ENCODE measurements at regions of chr6 and their contacts with region 1.

Region 1: DNA sequence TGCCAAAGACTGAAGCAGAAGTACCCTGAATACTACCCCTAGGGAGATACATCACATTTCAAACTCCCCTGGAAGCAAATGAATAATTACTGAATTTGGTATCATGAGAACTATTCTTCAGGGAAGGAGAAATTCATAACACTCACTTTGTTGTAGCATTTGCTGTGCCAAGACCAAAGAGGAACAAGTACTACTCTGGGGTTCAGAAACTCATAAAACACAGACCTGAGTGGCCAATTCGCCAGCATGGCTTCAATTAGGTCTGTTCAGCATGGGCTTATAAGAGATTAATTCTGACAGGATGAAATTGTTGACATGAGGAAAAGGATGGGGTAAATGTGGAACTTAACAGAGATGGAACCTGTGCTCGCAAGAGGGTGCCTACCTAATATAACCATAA is 6.5 kb downstream of the ELOVL5 start:
- DNase-seq: no peak
- ATAC-seq: peak; percentile 29
- H3K4me3 ChIP-seq: peak overlapping the region in 2 of 5 experiments; percentile 3 to 33
- H3K4me3 Mint-ChIP-seq: peak overlapping the region; percentile 77
- H3K27ac ChIP-seq: peak overlapping the region in 1 of 2 donors; percentile 76
- H3K27ac Mint-ChIP-seq: peak overlapping the region; percentile 89
- H3K4me1 ChIP-seq: peaks cover 88 to 91% of the 10 kb centered on the region in 2 donors
- H3K4me1 Mint-ChIP-seq: peaks cover 94% of the 10 kb centered on the region
- H3K27me3 ChIP-seq: no peaks in the 10 kb centered on the region
- H3K27me3 Mint-ChIP-seq: no peaks in the 10 kb centered on the region
- CTCF ChIP-seq: no peak

Region 2: DNA sequence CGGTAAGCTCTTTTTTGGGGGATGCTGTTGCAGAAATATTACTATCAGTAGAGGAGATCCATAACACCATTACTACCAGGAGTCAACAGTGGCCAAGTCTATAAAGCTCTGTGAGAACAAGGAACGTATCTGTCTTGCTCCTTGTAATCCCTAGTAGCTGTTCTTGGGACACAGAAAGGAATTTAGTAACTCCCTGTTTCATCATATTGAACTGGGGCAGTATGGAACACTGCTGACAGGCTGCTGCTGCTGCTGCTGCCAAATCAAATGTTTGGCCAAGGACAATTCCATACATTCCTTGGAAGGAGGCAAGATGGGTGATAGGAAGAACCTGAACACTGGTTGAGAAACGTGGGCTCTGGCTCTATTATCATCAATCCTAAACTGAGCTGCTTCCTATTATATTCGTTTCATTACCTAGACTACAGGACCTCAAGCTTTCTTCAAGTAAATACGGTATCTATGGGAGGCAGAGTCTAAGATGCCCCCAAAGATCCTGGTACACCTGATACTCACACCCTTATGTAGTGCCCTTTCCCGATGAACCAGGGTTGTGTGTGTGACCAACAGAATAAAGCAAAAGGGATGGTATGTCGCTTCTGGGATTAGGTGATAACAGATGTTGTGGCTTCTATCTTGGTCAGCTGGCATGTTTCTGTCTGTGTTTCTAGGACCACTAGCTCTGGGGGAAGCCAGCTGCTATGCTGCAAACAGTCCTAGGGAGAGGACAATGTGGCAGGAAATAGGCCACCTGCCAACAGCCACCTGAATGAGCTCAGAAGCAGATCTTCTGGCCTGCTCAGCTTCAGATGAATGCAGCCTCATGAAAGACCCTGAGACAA is 32.9 kb before region 1 on chr6:
- CTCF ChIA-PET with region 1: interaction called, 3 read pairs
- POLR2A ChIA-PET with region 1: no interaction called
- intact Hi-C with region 1: loop called (anchors 2 kb)
- DNase-seq: peak; percentile 39
- ATAC-seq: peak; percentile 60
- H3K4me3 ChIP-seq: peak overlapping the region in 1 of 5 experiments; percentile 2
- H3K4me3 Mint-ChIP-seq: peak overlapping the region; percentile 70
- H3K27ac ChIP-seq: peak overlapping the region; percentile 57 to 86
- H3K27ac Mint-ChIP-seq: peak overlapping the region; percentile 85
- H3K4me1 ChIP-seq: peaks cover 70 to 79% of the 10 kb centered on the region in 2 donors
- H3K4me1 Mint-ChIP-seq: peaks cover 80% of the 10 kb centered on the region
- H3K27me3 ChIP-seq: no peaks in the 10 kb centered on the region
- H3K27me3 Mint-ChIP-seq: no peaks in the 10 kb centered on the region
- CTCF ChIP-seq: no peak

Region 3: GRCh38 chr6:53811082-53811481 is 468.9 kb after region 1 on chr6:
- CTCF ChIA-PET with region 1: no interaction called
- POLR2A ChIA-PET with region 1: no interaction called
- intact Hi-C with region 1: no loop called
- DNase-seq: no peak
- ATAC-seq: no peak
- H3K4me3 ChIP-seq: no peak overlapping the region
- H3K4me3 Mint-ChIP-seq: no peak overlapping the region
- H3K27ac ChIP-seq: no peak overlapping the region
- H3K27ac Mint-ChIP-seq: no peak overlapping the region
- H3K4me1 ChIP-seq: peaks cover 9 to 10% of the 10 kb centered on the region in 2 donors
- H3K4me1 Mint-ChIP-seq: peaks cover 34% of the 10 kb centered on the region
- H3K27me3 ChIP-seq: no peaks in the 10 kb centered on the region
- H3K27me3 Mint-ChIP-seq: no peaks in the 10 kb centered on the region
- CTCF ChIP-seq: no peak

Measured in B cell (primary cell).